Activated CD4-positive, alpha-beta T cell treated with anti-CD3 and anti-CD28 coated beads, Interleukin-2, amount 10 ng/mL, durations not matched to agents 7 days and 5 days (primary cell): ENCODE measurements at regions of chr16 and their contacts with region 1.

Region 1: DNA sequence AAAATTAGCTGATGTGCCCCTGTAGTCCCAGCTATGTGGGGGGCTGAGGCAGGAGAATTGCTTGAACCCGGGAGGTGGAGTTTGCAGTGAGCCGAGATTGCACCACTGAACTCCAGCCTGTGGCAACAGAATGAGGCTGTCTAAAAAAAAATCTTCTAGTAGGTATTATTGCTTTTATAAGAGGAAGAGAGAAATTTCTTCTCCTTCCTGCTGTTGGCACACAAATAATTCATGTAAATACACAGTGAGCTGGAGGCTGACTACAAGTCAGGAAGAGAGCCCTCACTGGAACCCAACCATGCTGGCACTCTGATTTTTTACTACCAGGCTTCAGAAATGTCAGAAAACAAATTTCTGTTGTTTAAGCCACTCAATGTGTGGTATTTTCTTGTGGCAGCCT is 6.7 kb downstream of the PRDM7 start:
- DNase-seq: no peak
- H3K4me3 Mint-ChIP-seq: no peak overlapping the region
- H3K27ac Mint-ChIP-seq: no peak overlapping the region
- H3K4me1 Mint-ChIP-seq: no peaks in the 10 kb centered on the region
- H3K27me3 Mint-ChIP-seq: peaks cover 16% of the 10 kb centered on the region

Region 2: GRCh38 chr16:90081606-90081970 is 11.1 kb after region 1 on chr16:
- CTCF ChIA-PET with region 1: interaction called, 15 read pairs
- POLR2A ChIA-PET with region 1: no interaction called
- DNase-seq: no peak
- H3K4me3 Mint-ChIP-seq: peak overlapping the region; percentile 84
- H3K27ac Mint-ChIP-seq: peak overlapping the region; percentile 85
- H3K4me1 Mint-ChIP-seq: peaks cover 31% of the 10 kb centered on the region
- H3K27me3 Mint-ChIP-seq: peaks cover 21% of the 10 kb centered on the region